Activated T-helper 1 cell treated with anti-CD3 and anti-CD28 coated beads, Interleukin-12 subunit alpha, Interleukin-12 subunit beta, Interleukin-2, Interleukin-4 antibody, amounts not matched to agents 30 ng/mL and 10 ng/mL and 1 ng/mL, durations not matched to agents 14 hours and 24 hours and 36 hours (primary cell): ENCODE measurements at regions of chr1 and their contacts with region 1.

Region 1: DNA sequence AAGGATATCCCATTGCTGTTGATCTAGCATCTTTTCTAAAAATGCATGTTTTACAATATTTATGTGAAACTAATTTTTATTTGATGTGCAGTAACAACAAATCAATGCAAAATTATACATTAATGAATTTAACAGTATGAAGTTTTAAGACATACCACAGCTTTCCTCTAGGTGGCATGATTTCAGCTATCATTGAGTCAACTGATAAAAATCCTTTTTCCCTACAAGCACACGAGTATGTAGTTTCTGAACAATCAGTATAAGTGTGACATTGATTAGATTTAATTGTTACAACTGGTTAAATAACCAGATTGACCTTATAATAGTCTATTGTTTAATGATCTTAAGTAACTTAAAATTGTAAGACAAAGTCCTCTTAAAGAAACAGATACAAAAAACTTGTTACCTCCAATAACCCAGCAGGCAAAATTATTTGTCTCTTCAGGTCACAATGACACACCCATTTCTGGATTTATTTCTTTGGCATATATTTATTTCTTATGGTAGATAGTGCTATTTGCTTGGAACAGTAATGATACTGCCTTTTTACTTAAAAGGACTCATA is 5.8 kb upstream of the TGFB2 start:
- DNase-seq: no peak
- H3K4me3 Mint-ChIP-seq: no peak overlapping the region
- H3K27ac Mint-ChIP-seq: no peak overlapping the region
- H3K4me1 Mint-ChIP-seq: peaks cover 5% of the 10 kb centered on the region
- H3K27me3 Mint-ChIP-seq: peaks cover 21% of the 10 kb centered on the region

Region 2: GRCh38 chr1:218521375-218522169 is 182.2 kb after region 1 on chr1:
- intact Hi-C with region 1: loop called (anchors 1 kb)
- DNase-seq: peak; percentile 1
- H3K4me3 Mint-ChIP-seq: no peak overlapping the region
- H3K27ac Mint-ChIP-seq: no peak overlapping the region
- H3K4me1 Mint-ChIP-seq: no peaks in the 10 kb centered on the region
- H3K27me3 Mint-ChIP-seq: peaks cover 15% of the 10 kb centered on the region